Heart left ventricle (tissue), 16 donors: ENCODE measurements at regions of chr4 and their contacts with region 1.

Region 1: DNA sequence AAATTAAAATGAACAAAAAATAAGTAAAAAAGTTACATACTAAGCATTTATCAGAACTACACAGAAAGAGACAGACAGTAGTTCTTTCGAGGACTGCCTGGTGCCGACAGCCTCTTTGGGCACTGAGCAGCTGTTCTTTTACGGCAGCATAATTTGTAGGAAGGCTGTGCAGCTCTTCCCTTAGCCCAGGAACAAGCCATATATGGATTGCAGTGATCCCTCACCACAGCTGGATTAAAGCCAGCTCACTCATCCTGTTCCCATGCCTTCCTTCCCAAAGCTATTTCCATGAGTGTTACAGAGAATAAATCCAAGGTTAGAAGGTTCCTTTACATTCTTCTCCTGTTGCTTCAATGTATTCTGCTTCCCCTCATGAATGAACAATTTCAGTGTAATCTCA is 71.7 kb downstream of the DDX60L start:
- DNase-seq: peak in 4 of 5 donors; percentile 70 to 76 (median 72)
- ATAC-seq: peak; percentile 90 to 96 (median 92)
- H3K4me3 ChIP-seq: peak overlapping the region in 6 of 12 donors; percentile 3 to 28 (median 14)
- H3K27ac ChIP-seq: peak overlapping the region; percentile 21 to 93 (median 81)
- H3K4me1 ChIP-seq: peaks cover 0 to 41% (median 18%) of the 10 kb centered on the region in 12 donors
- H3K27me3 ChIP-seq: no peaks in the 10 kb centered on the region
- CTCF ChIP-seq: no peak
- POLR2A ChIP-seq: no peak

Region 2: GRCh38 chr4:168257768-168258167 is 150.9 kb before region 1 on chr4:
- intact Hi-C with region 1: loop called in 1 of 10 experiments (anchors 10 kb)
- DNase-seq: peak in 1 of 5 donors; percentile 24
- ATAC-seq: peak; percentile 72 to 93 (median 86)
- H3K4me3 ChIP-seq: no peak overlapping the region
- H3K27ac ChIP-seq: peak overlapping the region in 11 of 12 donors; percentile 11 to 88 (median 68)
- H3K4me1 ChIP-seq: peaks cover 0 to 26% (median 4%) of the 10 kb centered on the region in 12 donors
- H3K27me3 ChIP-seq: no peaks in the 10 kb centered on the region
- CTCF ChIP-seq: no peak
- POLR2A ChIP-seq: no peak

Region 3: GRCh38 chr4:168264903-168265302 is 143.7 kb before region 1 on chr4:
- intact Hi-C with region 1: loop called in 1 of 10 experiments (anchors 5 kb)
- DNase-seq: peak in 4 of 5 donors; percentile 54 to 79 (median 70)
- ATAC-seq: peak; percentile 87 to 95 (median 92)
- H3K4me3 ChIP-seq: no peak overlapping the region
- H3K27ac ChIP-seq: peak overlapping the region; percentile 38 to 87 (median 62)
- H3K4me1 ChIP-seq: peaks cover 0 to 23% (median 3%) of the 10 kb centered on the region in 12 donors
- H3K27me3 ChIP-seq: no peaks in the 10 kb centered on the region
- CTCF ChIP-seq: no peak
- POLR2A ChIP-seq: no peak

Region 4: GRCh38 chr4:168318266-168318895 is 90.2 kb before region 1 on chr4 and contains the start of gene DDX60:
- intact Hi-C with region 1: loop called in 4 of 10 experiments (anchors 5 kb)
- DNase-seq: peak; percentile 79 to 84 (median 84)
- ATAC-seq: peak; percentile 85 to 96 (median 95)
- H3K4me3 ChIP-seq: peak within 1 kb of the TSS; percentile 62 to 91 (median 78)
- H3K27ac ChIP-seq: peak within 1 kb of the TSS; percentile 91 to 99 (median 97)
- H3K4me1 ChIP-seq: peaks cover 0 to 24% (median 11%) of the 10 kb centered on the region in 12 donors
- H3K27me3 ChIP-seq: no peaks in the 10 kb centered on the region
- CTCF ChIP-seq: peak; percentile 41 to 71 (median 56)
- POLR2A ChIP-seq: peak in 1 of 2 donors; percentile 21
- total RNA-seq, gene DDX60: 3.8 to 27.2 (median 10.6) TPM

Region 5: GRCh38 chr4:168475745-168476144 is 67.1 kb after region 1 on chr4:
- intact Hi-C with region 1: loop called in 4 of 10 experiments (anchors 5 to 10 kb)
- DNase-seq: no peak
- ATAC-seq: no peak
- H3K4me3 ChIP-seq: no peak overlapping the region
- H3K27ac ChIP-seq: no peak overlapping the region
- H3K4me1 ChIP-seq: peaks cover 0 to 47% (median 13%) of the 10 kb centered on the region in 12 donors
- H3K27me3 ChIP-seq: no peaks in the 10 kb centered on the region
- CTCF ChIP-seq: no peak
- POLR2A ChIP-seq: no peak

Region 6: DNA sequence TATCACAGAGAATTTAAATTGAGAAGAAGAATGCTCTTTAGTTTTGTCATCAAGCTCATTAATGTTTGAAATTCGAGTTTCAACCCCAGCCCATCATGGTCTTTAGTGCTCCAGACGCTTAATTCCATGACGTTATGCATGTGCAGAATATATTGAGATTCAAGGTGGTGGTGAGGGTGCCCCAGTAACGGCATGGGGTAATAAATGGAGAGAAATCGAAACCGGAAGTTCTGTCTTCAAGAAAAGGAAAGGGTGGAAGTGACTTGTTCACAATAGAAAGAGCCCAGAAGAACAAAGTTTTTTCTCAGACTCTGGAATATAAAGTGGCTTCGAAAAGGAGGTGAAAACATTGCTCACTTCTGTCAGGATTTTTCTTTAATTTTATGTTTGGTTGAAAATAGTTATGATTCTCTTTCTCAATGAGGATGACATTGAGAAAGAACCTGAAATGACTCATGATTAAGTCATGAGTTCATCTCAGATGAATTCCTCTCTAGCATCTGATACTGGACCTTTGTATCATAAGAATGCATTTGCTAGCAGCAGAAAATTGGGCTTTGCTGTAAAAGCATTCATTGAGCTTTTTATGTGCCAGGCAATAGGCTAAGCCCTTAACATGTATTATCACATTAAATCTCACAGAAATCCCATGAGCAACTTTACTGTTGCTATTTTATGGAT is 72.5 kb after region 1 on chr4:
- intact Hi-C with region 1: loop called in 4 of 10 experiments (anchors 5 to 10 kb)
- DNase-seq: no peak
- ATAC-seq: peak; percentile 25 to 63 (median 50)
- H3K4me3 ChIP-seq: peak overlapping the region; percentile 38 to 88 (median 72)
- H3K27ac ChIP-seq: peak overlapping the region; percentile 81 to 98 (median 93)
- H3K4me1 ChIP-seq: peaks cover 4 to 56% (median 14%) of the 10 kb centered on the region in 12 donors
- H3K27me3 ChIP-seq: no peaks in the 10 kb centered on the region
- CTCF ChIP-seq: no peak
- POLR2A ChIP-seq: no peak